Mammary epithelial cell (primary cell): ENCODE measurements at regions of chr3 and their contacts with region 1.

Region 1: DNA sequence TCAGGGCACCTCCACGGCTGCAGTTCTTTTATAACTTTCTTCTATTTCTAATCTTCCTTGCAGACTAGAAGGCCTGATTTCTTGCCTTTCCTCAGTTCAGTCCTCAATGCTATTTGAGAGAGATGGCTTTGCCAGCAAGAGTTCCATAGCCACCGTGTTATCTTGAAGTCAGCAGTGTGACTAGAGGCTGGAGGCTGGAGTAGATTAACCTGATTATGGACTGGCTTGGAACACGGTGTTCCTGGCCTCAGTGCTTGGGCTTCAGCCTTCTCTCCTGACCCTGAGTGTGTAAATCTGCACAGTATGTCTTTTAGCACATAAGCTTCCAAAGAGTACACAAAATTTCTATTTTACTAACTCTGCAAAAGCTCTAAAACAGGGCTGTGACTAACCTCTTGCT is 61.4 kb downstream of the CCDC54 start:
- DNase-seq: no peak
- H3K4me3 ChIP-seq: no peak overlapping the region
- H3K27ac ChIP-seq: no peak overlapping the region
- H3K4me1 ChIP-seq: no peaks in the 10 kb centered on the region
- H3K27me3 ChIP-seq: no peaks in the 10 kb centered on the region
- CTCF ChIP-seq: no peak

Region 2: DNA sequence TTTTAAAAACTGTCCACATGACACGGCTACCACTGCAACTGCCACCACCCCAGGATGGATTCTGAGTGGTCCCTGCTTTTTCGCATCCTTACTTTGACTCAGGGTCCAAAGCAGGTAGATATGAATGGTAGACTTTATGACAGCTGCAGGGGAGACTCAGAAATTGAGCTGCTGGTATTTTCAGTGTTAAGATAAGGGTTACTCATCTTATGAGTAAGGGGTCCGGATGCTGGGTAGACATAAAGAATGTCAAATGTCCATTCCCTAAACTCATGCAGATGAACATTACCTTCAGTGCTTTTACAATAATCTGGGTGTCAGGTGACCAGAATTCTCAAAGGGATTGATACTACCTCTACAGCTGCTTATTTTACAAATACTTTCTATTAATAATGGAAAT is 58.2 kb after region 1 on chr3:
- CTCF ChIA-PET with region 1: no interaction called
- dilution Hi-C with region 1: loop called (anchors 5 kb)
- in situ Hi-C with region 1: no loop called
- intact Hi-C with region 1: no loop called
- DNase-seq: no peak
- H3K4me3 ChIP-seq: no peak overlapping the region
- H3K27ac ChIP-seq: no peak overlapping the region
- H3K4me1 ChIP-seq: no peaks in the 10 kb centered on the region
- H3K27me3 ChIP-seq: peaks cover 5% of the 10 kb centered on the region
- CTCF ChIP-seq: no peak

Region 3: GRCh38 chr3:107562969-107563529 is 124.4 kb after region 1 on chr3:
- CTCF ChIA-PET with region 1: no interaction called
- dilution Hi-C with region 1: no loop called
- in situ Hi-C with region 1: no loop called
- intact Hi-C with region 1: no loop called
- DNase-seq: no peak
- H3K4me3 ChIP-seq: no peak overlapping the region
- H3K27ac ChIP-seq: no peak overlapping the region
- H3K4me1 ChIP-seq: no peaks in the 10 kb centered on the region
- H3K27me3 ChIP-seq: no peaks in the 10 kb centered on the region
- CTCF ChIP-seq: no peak